Prostate gland (tissue), 2 donors: ENCODE measurements at regions of chr4 and their contacts with region 1.

Region 1: GRCh38 chr4:184287697-184288255 is 70.1 kb upstream of the ENPP6 start:
- DNase-seq: peak; percentile 94
- H3K4me3 ChIP-seq: peak overlapping the region in 1 of 2 donors; percentile 9
- H3K27ac ChIP-seq: peak overlapping the region; percentile 78 to 82
- H3K4me1 ChIP-seq: peaks cover 3% of the 10 kb centered on the region
- H3K27me3 ChIP-seq: no peaks in the 10 kb centered on the region
- CTCF ChIP-seq: peak in 3 of 4 experiments; percentile 42 to 65 (median 58)
- POLR2A ChIP-seq: no peak

Region 2: GRCh38 chr4:184329659-184330400 is 42.1 kb after region 1 on chr4:
- intact Hi-C with region 1: loop called (anchors 5 kb)
- DNase-seq: peak; percentile 42
- H3K4me3 ChIP-seq: no peak overlapping the region
- H3K27ac ChIP-seq: peak overlapping the region; percentile 77 to 79
- H3K4me1 ChIP-seq: peaks cover 12% of the 10 kb centered on the region
- H3K27me3 ChIP-seq: no peaks in the 10 kb centered on the region
- CTCF ChIP-seq: no peak
- POLR2A ChIP-seq: no peak